Heart left ventricle (tissue), 16 donors: ENCODE measurements at regions of chr10 and their contacts with region 1.

Region 1: DNA sequence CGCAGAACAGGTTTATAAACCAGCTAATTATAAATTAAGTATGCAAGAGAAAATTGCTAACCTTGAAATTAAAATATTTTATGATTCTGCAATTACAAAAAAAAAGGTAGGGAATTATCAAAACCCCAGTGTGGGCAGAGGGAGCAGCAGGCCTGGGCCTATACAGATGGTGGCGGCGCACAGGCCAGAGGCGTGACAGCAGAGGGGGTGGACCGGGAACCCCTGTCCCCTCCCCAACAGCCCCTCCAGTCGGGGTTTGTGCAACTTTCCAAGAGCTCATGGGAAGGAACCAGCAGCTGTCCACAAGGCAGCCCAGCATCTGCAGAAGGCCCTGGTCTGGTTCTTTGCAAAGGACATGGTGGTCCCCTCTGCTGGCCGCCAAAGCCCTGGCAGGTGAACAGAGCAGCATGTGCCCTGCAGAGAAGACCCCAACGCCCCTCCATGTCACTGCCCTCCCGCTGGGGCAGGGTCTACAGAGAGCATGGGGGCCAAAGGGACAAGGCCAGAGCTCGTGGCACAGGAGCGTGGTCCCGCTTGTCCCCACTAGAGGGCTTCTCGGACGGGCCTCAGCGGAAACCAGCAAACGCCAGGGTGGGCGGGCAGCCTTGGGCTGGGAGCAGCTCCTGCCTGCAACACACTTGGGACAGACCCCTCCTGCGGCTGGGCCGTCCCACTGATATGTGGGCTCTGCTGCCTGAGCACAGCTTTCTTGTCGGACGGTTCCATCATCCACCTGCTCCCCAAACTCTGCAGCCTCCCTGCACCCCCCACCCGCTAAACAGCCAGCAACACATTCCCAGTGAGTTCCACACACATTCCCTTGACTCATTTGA is 75.1 kb downstream of the EBF3 start:
- DNase-seq: peak; percentile 72 to 84 (median 78)
- ATAC-seq: peak; percentile 25 to 77 (median 74)
- H3K4me3 ChIP-seq: no peak overlapping the region
- H3K27ac ChIP-seq: peak overlapping the region in 4 of 12 donors; percentile 7 to 40 (median 24)
- H3K4me1 ChIP-seq: peaks cover 6 to 56% (median 32%) of the 10 kb centered on the region in 12 donors
- H3K27me3 ChIP-seq: no peaks in the 10 kb centered on the region
- CTCF ChIP-seq: peak; percentile 58 to 80 (median 72)
- POLR2A ChIP-seq: no peak

Region 2: GRCh38 chr10:129631006-129631405 is 258.0 kb before region 1 on chr10:
- intact Hi-C with region 1: no loop called
- DNase-seq: no peak
- ATAC-seq: no peak
- H3K4me3 ChIP-seq: no peak overlapping the region
- H3K27ac ChIP-seq: no peak overlapping the region
- H3K4me1 ChIP-seq: peaks cover 0 to 28% (median 16%) of the 10 kb centered on the region in 12 donors
- H3K27me3 ChIP-seq: no peaks in the 10 kb centered on the region
- CTCF ChIP-seq: no peak
- POLR2A ChIP-seq: no peak

Region 3: GRCh38 chr10:129942936-129943715 is 54.1 kb after region 1 on chr10:
- intact Hi-C with region 1: loop called in 2 of 10 experiments (anchors 5 kb)
- DNase-seq: peak in 2 of 5 donors; percentile 45 to 52
- ATAC-seq: no peak
- H3K4me3 ChIP-seq: no peak overlapping the region
- H3K27ac ChIP-seq: peak overlapping the region in 7 of 12 donors; percentile 0 to 65 (median 25)
- H3K4me1 ChIP-seq: peaks cover 0 to 91% (median 65%) of the 10 kb centered on the region in 12 donors
- H3K27me3 ChIP-seq: no peaks in the 10 kb centered on the region
- CTCF ChIP-seq: no peak
- POLR2A ChIP-seq: no peak

Region 4: GRCh38 chr10:129949891-129950291 is 60.9 kb after region 1 on chr10:
- intact Hi-C with region 1: loop called in 4 of 10 experiments (anchors 5 kb)
- DNase-seq: peak; percentile 87 to 89 (median 88)
- ATAC-seq: peak; percentile 65 to 76 (median 70)
- H3K4me3 ChIP-seq: peak overlapping the region in 5 of 12 donors; percentile 13 to 37 (median 32)
- H3K27ac ChIP-seq: peak overlapping the region in 11 of 12 donors; percentile 62 to 94 (median 89)
- H3K4me1 ChIP-seq: peaks cover 13 to 84% (median 66%) of the 10 kb centered on the region in 12 donors
- H3K27me3 ChIP-seq: peaks cover 0 to 9% (median 0%) of the 10 kb centered on the region in 9 donors
- CTCF ChIP-seq: no peak
- POLR2A ChIP-seq: peak in 1 of 2 donors; percentile 17

Region 5: DNA sequence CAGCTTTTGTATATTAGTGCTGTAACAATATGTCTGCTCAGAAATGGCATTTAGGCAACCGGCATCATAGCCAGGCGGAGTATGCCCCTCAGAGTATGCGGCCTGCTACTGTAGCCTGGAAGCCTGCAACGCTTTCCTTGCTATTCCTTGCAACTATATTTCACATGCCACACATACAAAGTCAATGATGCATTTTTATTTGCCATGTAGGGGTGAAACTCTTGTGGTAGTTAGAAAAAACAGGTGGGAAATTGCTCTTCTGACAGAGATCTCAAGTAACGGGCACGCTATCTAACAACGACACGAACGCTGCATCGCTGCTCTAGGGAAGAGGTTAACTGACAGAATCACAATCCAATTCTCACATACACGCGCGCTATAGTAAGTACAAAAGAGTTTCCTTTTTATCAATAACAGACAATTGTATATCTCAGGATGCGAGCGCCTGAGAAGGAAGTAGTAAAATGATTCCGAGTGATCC is 69.2 kb after region 1 on chr10:
- intact Hi-C with region 1: loop called in 5 of 10 experiments (anchors 5 kb)
- DNase-seq: peak in 1 of 5 donors; percentile 31
- ATAC-seq: peak in 2 of 4 donors; percentile 37 to 44
- H3K4me3 ChIP-seq: peak overlapping the region; percentile 39 to 93 (median 73)
- H3K27ac ChIP-seq: peak overlapping the region; percentile 73 to 94 (median 90)
- H3K4me1 ChIP-seq: peaks cover 0 to 38% (median 15%) of the 10 kb centered on the region in 12 donors
- H3K27me3 ChIP-seq: peaks cover 0 to 77% (median 33%) of the 10 kb centered on the region in 9 donors
- CTCF ChIP-seq: peak in 9 of 12 donors; percentile 22 to 57 (median 34)
- POLR2A ChIP-seq: no peak